ENCODE measurements at regions of chr12 and their contacts with region 1.

Region 1: DNA sequence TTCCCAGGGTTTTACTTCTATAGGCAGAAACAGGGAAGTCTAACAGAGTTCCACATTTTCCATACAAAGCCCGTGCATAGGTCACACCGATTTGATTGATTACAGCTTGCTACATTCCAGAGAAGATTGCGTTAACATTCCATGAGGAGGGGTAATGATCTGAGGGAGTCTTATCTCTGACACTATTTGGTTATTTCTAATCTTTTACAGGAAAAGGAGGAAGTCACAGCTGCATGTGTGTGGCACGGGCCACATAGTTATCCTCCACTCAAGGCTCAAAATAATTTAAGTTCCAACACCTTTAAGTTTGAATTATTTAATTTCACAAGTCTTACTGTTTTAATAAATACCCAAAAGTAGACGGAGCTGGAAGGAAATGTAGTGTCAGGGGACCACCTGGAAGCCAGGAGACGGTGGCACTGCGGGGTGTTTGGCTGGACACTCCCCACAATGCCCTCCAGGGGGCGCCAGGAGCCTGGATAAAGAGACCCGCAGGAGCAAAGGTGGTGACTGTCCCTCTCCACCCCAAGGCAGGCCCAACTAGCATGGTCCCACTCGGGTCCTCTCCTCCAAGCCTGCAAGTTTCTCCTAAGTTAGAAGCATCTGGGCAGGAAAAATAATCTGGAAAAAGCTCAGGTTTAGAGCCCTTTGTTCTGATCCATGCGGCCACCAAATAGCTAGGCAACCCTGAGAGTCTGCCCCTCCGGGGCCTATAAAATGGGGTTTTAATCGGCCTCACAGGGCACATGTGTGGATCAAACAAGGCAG is 20.2 kb downstream of the KRT8 start:
- DNase-seq: peak; percentile 61 to 90 (median 77)
- ATAC-seq: peak; percentile 88
- H3K4me3 ChIP-seq: no peak overlapping the region
- H3K4me3 Mint-ChIP-seq: no peak overlapping the region
- H3K27ac ChIP-seq: no peak overlapping the region
- H3K27ac Mint-ChIP-seq: no peak overlapping the region
- H3K4me1 ChIP-seq: peaks cover 5% of the 10 kb centered on the region
- H3K4me1 Mint-ChIP-seq: peaks cover 6% of the 10 kb centered on the region
- H3K27me3 ChIP-seq: no peaks in the 10 kb centered on the region
- H3K27me3 Mint-ChIP-seq: peaks cover 13% of the 10 kb centered on the region
- CTCF ChIP-seq: peak; percentile 88

Region 2: GRCh38 chr12:51661836-51662235 is 1222.9 kb before region 1 on chr12:
- CTCF ChIA-PET with region 1: no interaction called
- POLR2A ChIA-PET with region 1: no interaction called
- intact Hi-C with region 1: no loop called
- DNase-seq: no peak
- ATAC-seq: no peak
- H3K4me3 ChIP-seq: no peak overlapping the region
- H3K4me3 Mint-ChIP-seq: no peak overlapping the region
- H3K27ac ChIP-seq: no peak overlapping the region
- H3K27ac Mint-ChIP-seq: no peak overlapping the region
- H3K4me1 ChIP-seq: no peaks in the 10 kb centered on the region
- H3K4me1 Mint-ChIP-seq: no peaks in the 10 kb centered on the region
- H3K27me3 ChIP-seq: peaks cover 0 to 2% of the 10 kb centered on the region in 2 experiments
- H3K27me3 Mint-ChIP-seq: peaks cover 7% of the 10 kb centered on the region
- CTCF ChIP-seq: no peak

Region 3: DNA sequence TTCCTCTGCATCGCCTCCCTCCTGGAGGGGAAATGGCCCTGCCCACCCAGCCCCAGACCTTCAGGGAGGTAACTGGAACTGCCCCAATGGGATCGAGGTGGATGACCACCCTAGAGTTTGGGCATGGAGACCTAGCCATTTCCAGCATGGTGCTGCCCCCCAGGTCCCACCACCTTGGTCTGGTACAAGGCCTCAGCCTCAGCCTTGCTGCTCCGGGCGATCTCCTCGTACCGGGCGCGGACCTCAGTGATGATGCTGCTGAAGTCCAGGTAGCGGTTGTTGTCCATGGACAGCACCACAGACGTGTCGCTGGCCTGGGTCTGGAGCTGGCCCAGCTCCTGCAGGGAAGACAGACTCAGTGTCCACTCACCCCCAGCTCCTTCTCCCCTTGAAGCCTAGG is 40.3 kb before region 1 on chr12:
- CTCF ChIA-PET with region 1: interaction called, 15 read pairs
- POLR2A ChIA-PET with region 1: no interaction called
- intact Hi-C with region 1: no loop called
- DNase-seq: no peak
- ATAC-seq: no peak
- H3K4me3 ChIP-seq: no peak overlapping the region
- H3K4me3 Mint-ChIP-seq: no peak overlapping the region
- H3K27ac ChIP-seq: no peak overlapping the region
- H3K27ac Mint-ChIP-seq: no peak overlapping the region
- H3K4me1 ChIP-seq: no peaks in the 10 kb centered on the region
- H3K4me1 Mint-ChIP-seq: peaks cover 5% of the 10 kb centered on the region
- H3K27me3 ChIP-seq: no peaks in the 10 kb centered on the region
- H3K27me3 Mint-ChIP-seq: peaks cover 5% of the 10 kb centered on the region
- CTCF ChIP-seq: no peak

Region 4: GRCh38 chr12:52903855-52904508 is 19.3 kb after region 1 on chr12:
- CTCF ChIA-PET with region 1: interaction called, 73 read pairs
- POLR2A ChIA-PET with region 1: no interaction called
- intact Hi-C with region 1: no loop called
- DNase-seq: peak in 8 of 9 experiments; percentile 14 to 56 (median 42)
- ATAC-seq: peak; percentile 56
- H3K4me3 ChIP-seq: peak overlapping the region in 1 of 2 experiments; percentile 49
- H3K4me3 Mint-ChIP-seq: peak overlapping the region; percentile 77
- H3K27ac ChIP-seq: no peak overlapping the region
- H3K27ac Mint-ChIP-seq: peak overlapping the region; percentile 41
- H3K4me1 ChIP-seq: peaks cover 4% of the 10 kb centered on the region
- H3K4me1 Mint-ChIP-seq: peaks cover 7% of the 10 kb centered on the region
- H3K27me3 ChIP-seq: peaks cover 0 to 2% of the 10 kb centered on the region in 2 experiments
- H3K27me3 Mint-ChIP-seq: no peaks in the 10 kb centered on the region
- CTCF ChIP-seq: no peak

Region 5: GRCh38 chr12:52951640-52952431 is 67.1 kb after region 1 on chr12:
- CTCF ChIA-PET with region 1: interaction called, 21 read pairs
- POLR2A ChIA-PET with region 1: no interaction called
- intact Hi-C with region 1: no loop called
- DNase-seq: no peak
- ATAC-seq: no peak
- H3K4me3 ChIP-seq: no peak overlapping the region
- H3K4me3 Mint-ChIP-seq: no peak overlapping the region
- H3K27ac ChIP-seq: no peak overlapping the region
- H3K27ac Mint-ChIP-seq: no peak overlapping the region
- H3K4me1 ChIP-seq: peaks cover 13% of the 10 kb centered on the region
- H3K4me1 Mint-ChIP-seq: peaks cover 14% of the 10 kb centered on the region
- H3K27me3 ChIP-seq: no peaks in the 10 kb centered on the region
- H3K27me3 Mint-ChIP-seq: no peaks in the 10 kb centered on the region
- CTCF ChIP-seq: no peak

Region 6: GRCh38 chr12:52980693-52981423 is 96.1 kb after region 1 on chr12:
- CTCF ChIA-PET with region 1: interaction called, 524 read pairs
- POLR2A ChIA-PET with region 1: no interaction called
- intact Hi-C with region 1: loop called in 1 of 2 experiments (anchors 1 kb)
- DNase-seq: peak; percentile 63 to 90 (median 83)
- ATAC-seq: peak; percentile 94
- H3K4me3 ChIP-seq: no peak overlapping the region
- H3K4me3 Mint-ChIP-seq: no peak overlapping the region
- H3K27ac ChIP-seq: no peak overlapping the region
- H3K27ac Mint-ChIP-seq: no peak overlapping the region
- H3K4me1 ChIP-seq: no peaks in the 10 kb centered on the region
- H3K4me1 Mint-ChIP-seq: no peaks in the 10 kb centered on the region
- H3K27me3 ChIP-seq: peaks cover 0 to 4% of the 10 kb centered on the region in 2 experiments
- H3K27me3 Mint-ChIP-seq: peaks cover 45% of the 10 kb centered on the region
- CTCF ChIP-seq: peak; percentile 92

Measured in CD8-positive, alpha-beta T cell (primary cell).